ENCODE measurements at regions of chr2 and their contacts with region 1.

Region 1: GRCh38 chr2:27453967-27454366 is 11.8 kb downstream of the KRTCAP3 start:
- DNase-seq: no peak

Region 2: GRCh38 chr2:27628767-27629709 is 175.1 kb after region 1 on chr2 and contains the starts of genes CCDC121 and GPN1:
- in situ Hi-C with region 1: loop called (anchors 10 kb)
- DNase-seq: peak; percentile 90
- total RNA-seq, gene CCDC121: 2.9 and 4.2 TPM in 2 replicates
- total RNA-seq, gene GPN1: 45.7 and 63.6 TPM in 2 replicates